Right ventricle myocardium inferior (tissue), 1 donor: ENCODE measurements at regions of chr1 and their contacts with region 1.

Region 1: DNA sequence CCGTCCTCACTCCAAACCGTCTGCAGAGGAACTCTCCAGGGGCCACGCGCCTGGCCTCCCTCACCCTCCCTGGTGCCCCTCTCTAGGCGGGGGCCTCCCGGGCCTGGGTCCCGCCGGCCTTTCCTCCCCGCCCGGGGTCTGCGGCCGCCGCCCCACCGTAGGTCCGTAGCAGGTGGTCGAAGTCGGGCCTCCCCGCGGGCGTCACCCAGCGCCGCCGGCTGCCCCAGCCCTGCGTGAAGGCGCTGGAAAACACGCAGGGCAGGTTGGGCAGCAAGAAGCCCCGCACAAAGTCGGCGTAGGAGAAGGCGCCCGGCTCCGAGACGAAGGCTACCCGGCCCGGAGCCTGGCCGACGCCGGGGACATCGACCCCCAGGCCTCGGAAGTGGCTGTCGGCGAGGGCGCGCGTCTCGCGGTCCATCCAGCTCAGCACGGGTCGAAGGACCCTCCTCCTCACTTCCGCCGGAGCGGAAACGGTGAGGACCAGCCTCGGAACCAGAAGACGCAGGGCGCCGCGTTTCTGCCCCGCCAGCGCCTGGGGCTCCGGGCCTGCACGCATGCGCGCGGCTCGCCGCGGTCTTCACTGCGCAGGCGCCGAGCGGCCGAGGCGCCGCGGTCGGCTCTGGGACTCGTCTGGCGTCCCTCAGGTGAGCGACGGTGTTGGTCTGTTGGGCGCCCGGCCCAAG is at the starts of genes JMJD4 and SNAP47:
- DNase-seq: peak; percentile 95
- ATAC-seq: peak; percentile 94
- total RNA-seq, gene JMJD4: 7.1 TPM
- total RNA-seq, gene SNAP47: 30.1 TPM

Region 2: GRCh38 chr1:227563324-227564201 is 171.4 kb before region 1 on chr1 and contains the start of gene ZNF678:
- intact Hi-C with region 1: loop called (anchors 5 kb)
- DNase-seq: peak; percentile 91
- ATAC-seq: peak; percentile 98
- total RNA-seq, gene ZNF678: 3.0 TPM

Region 3: DNA sequence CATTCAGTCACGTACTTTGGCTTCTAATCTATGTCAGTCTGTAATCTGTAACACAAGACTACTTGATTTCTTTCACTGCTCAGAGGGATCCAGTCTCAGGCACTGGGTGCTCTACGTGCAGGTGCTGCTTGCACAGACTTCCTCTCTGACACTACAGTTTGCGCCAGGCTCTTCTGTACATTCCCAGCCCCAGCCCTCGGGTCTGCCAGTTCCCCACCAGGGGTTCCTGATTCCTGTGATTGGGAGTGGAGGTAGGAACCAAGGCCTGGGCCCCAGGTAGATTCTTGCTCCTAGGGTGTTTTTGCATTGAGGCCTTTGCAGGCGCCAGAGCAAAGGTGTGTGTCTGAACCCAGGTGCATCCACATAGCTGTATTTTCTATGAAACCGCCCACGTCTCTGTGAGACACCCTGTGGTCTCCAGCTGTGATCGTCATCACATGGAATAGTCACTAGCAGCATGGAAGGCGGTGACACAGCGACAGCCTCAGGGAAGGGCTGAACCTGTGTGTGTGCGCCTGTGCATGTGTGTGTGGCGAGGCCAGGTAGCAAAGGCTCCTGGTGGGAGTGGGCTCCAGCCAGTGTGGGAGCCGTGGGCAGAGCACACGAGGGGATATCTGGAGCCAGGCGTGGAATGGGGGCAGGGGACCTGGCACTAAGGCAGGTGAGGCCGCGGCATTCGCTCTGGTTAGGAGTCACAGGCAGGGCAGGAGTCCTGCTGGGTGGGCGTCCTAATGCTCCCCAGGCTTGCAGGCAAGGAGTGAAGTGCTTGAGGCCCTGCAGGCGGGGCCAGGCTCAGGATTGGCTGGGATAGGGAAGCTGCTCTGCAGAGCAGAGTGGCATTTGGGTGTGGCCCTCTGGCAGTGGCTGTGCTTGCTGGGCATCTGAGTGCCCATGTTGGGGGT is 419.9 kb after region 1 on chr1:
- intact Hi-C with region 1: no loop called
- DNase-seq: peak; percentile 68
- ATAC-seq: no peak